ENCODE measurements at regions of chr17 and their contacts with region 1.

Region 1: DNA sequence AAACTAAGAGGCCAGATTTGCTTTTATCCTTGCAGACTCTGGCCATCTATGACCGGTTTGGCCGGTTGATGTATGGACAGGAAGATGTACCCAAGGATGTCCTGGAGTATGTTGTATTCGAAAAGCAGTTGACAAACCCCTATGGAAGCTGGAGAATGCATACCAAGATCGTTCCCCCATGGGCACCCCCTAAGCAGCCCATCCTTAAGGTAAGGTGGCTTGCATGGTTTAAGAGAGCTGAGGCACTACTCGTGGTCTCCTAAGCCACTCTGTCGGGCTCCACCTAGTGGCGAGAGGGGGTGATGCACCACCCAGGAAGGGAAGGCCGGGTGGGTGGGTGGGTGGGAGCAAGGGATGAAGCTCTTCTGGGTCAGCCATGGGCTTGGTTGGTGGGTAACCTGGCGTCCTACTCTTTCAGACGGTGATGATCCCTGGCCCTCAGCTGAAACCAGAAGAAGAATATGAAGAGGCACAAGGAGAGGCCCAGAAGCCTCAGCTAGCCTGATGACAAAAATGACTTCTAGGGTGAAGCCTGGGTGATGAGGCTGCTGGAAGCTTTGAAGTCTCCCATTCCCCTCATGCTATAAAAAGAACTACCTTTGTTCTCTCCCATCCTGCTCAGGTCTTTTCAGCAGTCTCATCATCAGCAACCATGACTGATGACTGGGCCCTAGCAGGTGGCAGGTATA is 21.5 kb downstream of the GPR179 start:
- DNase-seq: no peak
- H3K4me3 ChIP-seq: no peak overlapping the region
- H3K27ac ChIP-seq: no peak overlapping the region
- H3K27me3 ChIP-seq: peaks cover 3% of the 10 kb centered on the region
- CTCF ChIP-seq: peak; percentile 63

Region 2: GRCh38 chr17:37849617-37849972 is 472.6 kb before region 1 on chr17:
- CTCF ChIA-PET with region 1: no interaction called
- POLR2A ChIA-PET with region 1: no interaction called
- DNase-seq: no peak
- H3K4me3 ChIP-seq: no peak overlapping the region
- H3K27ac ChIP-seq: no peak overlapping the region
- H3K27me3 ChIP-seq: peaks cover 8% of the 10 kb centered on the region
- CTCF ChIP-seq: no peak

Region 3: DNA sequence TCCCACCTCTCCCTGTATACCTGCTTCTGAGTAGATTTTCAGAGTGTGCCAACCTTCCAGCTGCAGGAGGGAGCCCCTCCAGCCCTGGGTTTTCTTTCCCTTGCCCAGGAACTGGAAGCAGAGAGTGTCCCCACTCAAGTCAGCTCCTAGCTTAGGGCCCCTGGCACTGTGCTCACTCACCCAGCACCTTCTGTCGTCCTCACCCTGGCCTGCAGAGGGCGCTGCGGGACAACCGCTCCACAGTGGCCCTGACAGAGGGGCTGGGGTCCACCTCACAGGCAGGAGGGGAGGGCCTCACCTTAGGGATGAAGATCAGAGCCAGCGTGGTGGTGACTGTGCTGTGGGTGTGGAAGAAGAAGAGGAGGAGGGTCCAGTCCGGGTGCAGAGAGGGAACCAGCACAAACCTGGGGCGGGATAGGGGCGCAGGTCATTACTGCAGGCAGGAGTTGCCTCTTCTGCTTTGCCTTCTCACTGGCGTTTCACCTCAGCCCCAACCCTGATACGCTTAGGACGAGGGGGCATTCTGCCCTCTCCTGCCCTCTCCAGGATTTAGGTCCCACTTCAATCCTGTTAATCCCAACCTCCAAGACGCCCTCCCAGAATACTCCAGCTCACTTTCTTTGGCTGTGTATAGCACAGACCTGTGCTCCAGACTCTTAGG is 11.5 kb after region 1 on chr17:
- CTCF ChIA-PET with region 1: interaction called, 28 read pairs
- POLR2A ChIA-PET with region 1: interaction called, 5 read pairs
- DNase-seq: no peak
- H3K4me3 ChIP-seq: no peak overlapping the region
- H3K27ac ChIP-seq: no peak overlapping the region
- H3K27me3 ChIP-seq: peaks cover 48% of the 10 kb centered on the region
- CTCF ChIP-seq: peak; percentile 60

Region 4: DNA sequence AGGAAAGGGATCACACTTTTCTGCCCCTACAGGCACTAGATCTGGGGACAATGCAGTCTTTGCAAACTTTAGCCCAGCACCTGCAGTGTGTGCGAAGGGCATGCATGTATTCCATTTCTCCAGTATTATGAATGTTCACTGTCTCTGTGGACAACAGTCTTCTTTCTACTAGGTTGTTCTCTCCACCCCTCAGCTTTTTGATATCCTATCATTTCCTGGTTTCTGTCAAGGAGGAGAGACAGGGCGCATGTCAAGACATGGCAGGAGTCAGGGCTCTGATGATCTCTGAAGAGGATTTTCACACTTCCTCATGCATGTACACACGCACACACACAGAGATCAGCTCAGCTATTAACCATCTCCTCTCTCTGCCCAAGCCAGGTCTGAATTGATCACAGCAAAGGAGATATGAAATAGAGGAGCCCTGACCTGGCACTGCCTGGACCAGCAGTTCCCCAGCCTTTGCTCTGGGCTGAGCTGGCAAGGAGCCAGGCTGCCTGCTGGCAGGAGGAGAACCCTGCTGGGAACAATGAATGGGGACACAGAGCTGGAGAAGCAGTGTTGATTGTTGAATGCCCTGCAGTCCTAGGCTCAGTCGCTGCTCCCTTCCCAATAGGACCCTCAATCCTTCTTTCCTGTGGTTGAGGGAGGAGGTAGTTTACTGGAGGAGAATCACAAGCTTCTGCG is 18.9 kb after region 1 on chr17:
- CTCF ChIA-PET with region 1: interaction called, 17 read pairs
- POLR2A ChIA-PET with region 1: no interaction called
- DNase-seq: no peak
- H3K4me3 ChIP-seq: no peak overlapping the region
- H3K27ac ChIP-seq: no peak overlapping the region
- H3K27me3 ChIP-seq: peaks cover 44% of the 10 kb centered on the region
- CTCF ChIP-seq: no peak

Region 5: GRCh38 chr17:38444151-38444550 is 121.9 kb after region 1 on chr17:
- CTCF ChIA-PET with region 1: no interaction called
- POLR2A ChIA-PET with region 1: no interaction called
- DNase-seq: no peak
- H3K4me3 ChIP-seq: no peak overlapping the region
- H3K27ac ChIP-seq: no peak overlapping the region
- H3K27me3 ChIP-seq: no peaks in the 10 kb centered on the region
- CTCF ChIP-seq: peak; percentile 95